ENCODE measurements at regions of chr9 and their contacts with region 1.

Region 1: DNA sequence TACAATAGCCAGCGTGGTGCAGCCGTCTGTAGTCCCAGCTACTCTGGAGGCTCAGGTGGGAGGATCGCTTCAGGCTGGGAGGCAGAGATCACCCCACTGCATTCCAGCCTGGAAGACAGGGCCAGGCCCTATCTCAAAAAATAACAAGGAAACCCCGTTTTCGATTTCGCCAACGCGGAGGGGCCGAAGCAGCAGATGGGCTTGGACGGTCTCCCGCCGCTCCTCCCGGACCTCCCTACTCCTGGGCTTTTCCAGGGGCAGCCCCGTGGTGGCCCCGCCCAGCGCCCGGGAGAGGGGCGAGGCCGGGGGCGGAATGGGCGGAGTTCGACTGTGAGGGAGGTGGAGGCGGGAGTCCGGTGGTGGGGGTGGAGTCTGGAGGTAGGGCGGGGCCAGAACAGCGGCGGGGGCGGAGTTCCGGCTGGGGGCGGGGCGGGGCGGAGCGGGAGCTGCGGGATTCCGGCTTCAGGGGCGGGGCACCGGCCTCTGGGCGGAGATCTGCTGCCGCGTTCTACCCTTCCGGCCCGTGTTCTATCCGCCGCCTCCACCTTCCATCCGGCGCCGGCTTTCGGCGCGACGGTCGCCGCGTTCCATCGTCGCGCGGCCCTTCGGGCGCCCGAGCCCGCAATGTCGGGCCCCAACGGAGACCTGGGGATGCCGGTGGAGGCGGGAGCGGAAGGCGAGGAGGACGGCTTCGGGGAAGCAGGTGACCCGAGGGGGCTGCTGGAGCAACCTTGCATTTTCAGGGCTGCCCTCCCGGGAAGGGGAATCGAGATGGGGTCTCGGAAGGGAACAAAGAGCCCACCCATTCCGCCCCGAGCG is at the start of gene BBLN:
- DNase-seq: peak; percentile 94
- H3K4me3 Mint-ChIP-seq: peak within 1 kb of the TSS; percentile 70
- H3K27ac Mint-ChIP-seq: peak within 1 kb of the TSS; percentile 71
- H3K4me1 Mint-ChIP-seq: peaks cover 18% of the 10 kb centered on the region
- H3K27me3 Mint-ChIP-seq: no peaks in the 10 kb centered on the region
- CTCF ChIP-seq: no peak
- total RNA-seq, gene BBLN: 68.6 and 70.4 TPM in 2 replicates

Region 2: DNA sequence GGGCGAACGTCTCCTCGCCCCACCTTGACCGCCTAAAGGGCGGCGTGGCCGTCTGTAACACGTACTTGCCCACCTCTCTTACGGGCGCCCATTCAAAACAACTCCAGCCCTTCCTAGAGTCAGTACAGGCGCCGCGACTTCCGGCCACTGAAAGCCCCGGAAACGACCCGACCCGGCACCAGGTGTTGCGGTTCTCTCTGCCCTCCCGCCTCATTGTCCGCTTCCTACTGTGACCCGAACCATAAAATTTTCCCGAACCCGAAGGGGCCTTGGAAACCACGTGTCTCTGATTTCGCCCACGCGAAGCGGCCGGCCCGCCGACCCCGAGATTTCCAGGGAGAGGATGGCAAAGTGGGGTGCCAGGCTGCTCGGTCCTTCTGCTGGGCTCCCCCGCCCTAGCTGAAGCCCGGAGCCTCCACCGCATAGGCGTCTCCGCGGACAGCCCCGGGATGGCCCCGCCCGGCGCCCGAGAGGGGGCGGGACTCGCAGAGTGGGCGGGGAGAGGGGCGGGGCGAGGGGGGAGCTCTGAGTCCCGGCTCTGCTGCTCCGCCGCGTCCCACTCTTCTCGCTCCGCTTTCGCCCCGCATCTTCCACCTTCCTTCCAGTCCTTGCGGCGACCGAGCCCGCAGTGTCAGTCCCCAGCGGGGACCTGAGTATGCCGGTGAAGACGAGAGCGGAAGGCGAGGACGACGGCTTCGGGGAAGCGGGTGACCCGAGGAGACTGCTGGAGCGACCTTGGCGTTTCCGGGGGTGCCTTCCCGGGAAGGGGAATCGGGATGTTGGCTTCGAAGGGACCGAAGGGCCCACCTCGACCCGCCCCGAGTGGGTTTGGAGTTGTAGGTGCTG is 31.8 kb before region 1 on chr9:
- CTCF ChIA-PET with region 1: no interaction called
- POLR2A ChIA-PET with region 1: interaction called, 10 read pairs
- intact Hi-C with region 1: no loop called
- DNase-seq: peak; percentile 92
- H3K4me3 Mint-ChIP-seq: peak overlapping the region; percentile 84
- H3K27ac Mint-ChIP-seq: peak overlapping the region; percentile 97
- H3K4me1 Mint-ChIP-seq: peaks cover 23% of the 10 kb centered on the region
- H3K27me3 Mint-ChIP-seq: peaks cover 9% of the 10 kb centered on the region
- CTCF ChIP-seq: no peak

Measured in MCF 10A (cell line).